Breast epithelium (tissue), 4 donors: ENCODE measurements at regions of chr2 and their contacts with region 1.

Region 1: GRCh38 chr2:84137034-84137433 is 322.0 kb downstream of the SUCLG1 start:
- DNase-seq: no peak
- H3K4me3 ChIP-seq: no peak overlapping the region
- H3K27ac ChIP-seq: no peak overlapping the region
- H3K4me1 ChIP-seq: no peaks in the 10 kb centered on the region
- H3K27me3 ChIP-seq: no peaks in the 10 kb centered on the region
- CTCF ChIP-seq: no peak
- POLR2A ChIP-seq: no peak

Region 2: GRCh38 chr2:83459456-83459855 is 677.6 kb before region 1 on chr2:
- intact Hi-C with region 1: no loop called
- DNase-seq: no peak
- H3K4me3 ChIP-seq: no peak overlapping the region
- H3K27ac ChIP-seq: no peak overlapping the region
- H3K4me1 ChIP-seq: no peaks in the 10 kb centered on the region
- H3K27me3 ChIP-seq: no peaks in the 10 kb centered on the region
- CTCF ChIP-seq: no peak
- POLR2A ChIP-seq: no peak

Region 3: GRCh38 chr2:83674050-83674449 is 463.0 kb before region 1 on chr2:
- intact Hi-C with region 1: loop called (anchors 5 kb)
- DNase-seq: no peak
- H3K4me3 ChIP-seq: no peak overlapping the region
- H3K27ac ChIP-seq: no peak overlapping the region
- H3K4me1 ChIP-seq: no peaks in the 10 kb centered on the region
- H3K27me3 ChIP-seq: no peaks in the 10 kb centered on the region
- CTCF ChIP-seq: no peak
- POLR2A ChIP-seq: no peak

Region 4: GRCh38 chr2:84077492-84077891 is 59.5 kb before region 1 on chr2:
- intact Hi-C with region 1: no loop called
- DNase-seq: no peak
- H3K4me3 ChIP-seq: no peak overlapping the region
- H3K27ac ChIP-seq: no peak overlapping the region
- H3K4me1 ChIP-seq: no peaks in the 10 kb centered on the region
- H3K27me3 ChIP-seq: no peaks in the 10 kb centered on the region
- CTCF ChIP-seq: no peak
- POLR2A ChIP-seq: no peak

Region 5: GRCh38 chr2:84115173-84115857 is 21.7 kb before region 1 on chr2:
- intact Hi-C with region 1: loop called (anchors 2 kb)
- DNase-seq: no peak
- H3K4me3 ChIP-seq: no peak overlapping the region
- H3K27ac ChIP-seq: no peak overlapping the region
- H3K4me1 ChIP-seq: no peaks in the 10 kb centered on the region
- H3K27me3 ChIP-seq: no peaks in the 10 kb centered on the region
- CTCF ChIP-seq: no peak
- POLR2A ChIP-seq: no peak

Region 6: DNA sequence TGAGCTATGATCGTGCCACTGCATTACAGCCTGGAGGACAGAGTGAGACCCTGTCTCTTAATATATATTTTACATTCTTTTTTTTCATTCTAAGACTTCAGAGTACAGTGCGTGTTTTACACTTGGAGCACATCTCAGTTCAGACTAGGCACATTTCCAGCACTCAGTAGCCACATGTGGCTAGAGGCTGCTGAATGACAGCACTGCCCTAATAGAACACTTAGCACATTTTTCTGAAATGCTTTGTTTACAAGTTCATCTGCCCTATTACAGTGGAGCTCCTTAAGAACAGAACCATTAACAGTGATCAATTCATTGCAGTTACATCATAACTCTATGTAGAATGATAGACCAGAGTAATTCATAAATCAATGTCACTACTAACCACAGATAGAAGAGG is 183.9 kb after region 1 on chr2:
- intact Hi-C with region 1: loop called (anchors 5 kb)
- DNase-seq: no peak
- H3K4me3 ChIP-seq: no peak overlapping the region
- H3K27ac ChIP-seq: no peak overlapping the region
- H3K4me1 ChIP-seq: no peaks in the 10 kb centered on the region
- H3K27me3 ChIP-seq: no peaks in the 10 kb centered on the region
- CTCF ChIP-seq: no peak
- POLR2A ChIP-seq: no peak